ENCODE measurements at regions of chr5 and their contacts with region 1.

Region 1: GRCh38 chr5:150656191-150657132 is 4.6 kb upstream of the MYOZ3 start:
- DNase-seq: peak; percentile 86

Region 2: DNA sequence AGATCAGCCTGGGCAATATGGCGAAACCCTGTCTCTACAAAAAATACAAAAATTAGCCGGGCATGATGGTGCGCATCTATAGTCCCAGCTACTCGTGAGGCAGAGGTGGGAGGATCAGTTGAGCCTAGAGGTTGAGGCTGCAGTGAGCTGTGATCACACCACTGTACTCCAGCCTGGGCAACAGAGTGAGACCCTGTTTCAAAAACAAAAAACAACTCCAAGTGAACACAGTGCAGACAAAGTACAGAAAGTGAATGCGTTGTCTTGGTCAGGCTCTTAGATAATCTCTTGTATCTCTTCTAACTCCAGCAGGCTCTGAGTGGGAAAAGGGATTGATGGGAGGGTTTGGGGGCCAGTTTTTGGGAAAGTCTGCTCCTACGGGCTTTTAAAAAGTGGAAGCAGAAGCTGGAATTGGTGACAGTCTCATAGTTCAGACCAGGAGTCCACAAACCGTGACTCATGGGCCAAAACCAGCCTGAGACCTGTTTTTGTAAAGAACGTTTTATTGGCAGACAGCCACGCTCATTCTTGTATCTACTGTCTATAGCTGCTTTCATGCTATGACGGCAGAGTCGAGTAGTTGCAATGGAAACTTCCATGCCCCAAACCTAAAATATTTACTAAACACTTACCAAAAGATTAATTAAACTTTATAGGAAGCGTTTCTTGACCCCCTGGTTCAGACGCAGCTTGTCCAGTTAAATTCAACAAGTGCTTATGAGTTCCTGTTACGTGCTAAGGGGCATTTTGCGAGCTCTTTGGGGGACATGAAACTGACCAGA is 115.7 kb before region 1 on chr5:
- intact Hi-C with region 1: no loop called
- DNase-seq: no peak

Region 3: DNA sequence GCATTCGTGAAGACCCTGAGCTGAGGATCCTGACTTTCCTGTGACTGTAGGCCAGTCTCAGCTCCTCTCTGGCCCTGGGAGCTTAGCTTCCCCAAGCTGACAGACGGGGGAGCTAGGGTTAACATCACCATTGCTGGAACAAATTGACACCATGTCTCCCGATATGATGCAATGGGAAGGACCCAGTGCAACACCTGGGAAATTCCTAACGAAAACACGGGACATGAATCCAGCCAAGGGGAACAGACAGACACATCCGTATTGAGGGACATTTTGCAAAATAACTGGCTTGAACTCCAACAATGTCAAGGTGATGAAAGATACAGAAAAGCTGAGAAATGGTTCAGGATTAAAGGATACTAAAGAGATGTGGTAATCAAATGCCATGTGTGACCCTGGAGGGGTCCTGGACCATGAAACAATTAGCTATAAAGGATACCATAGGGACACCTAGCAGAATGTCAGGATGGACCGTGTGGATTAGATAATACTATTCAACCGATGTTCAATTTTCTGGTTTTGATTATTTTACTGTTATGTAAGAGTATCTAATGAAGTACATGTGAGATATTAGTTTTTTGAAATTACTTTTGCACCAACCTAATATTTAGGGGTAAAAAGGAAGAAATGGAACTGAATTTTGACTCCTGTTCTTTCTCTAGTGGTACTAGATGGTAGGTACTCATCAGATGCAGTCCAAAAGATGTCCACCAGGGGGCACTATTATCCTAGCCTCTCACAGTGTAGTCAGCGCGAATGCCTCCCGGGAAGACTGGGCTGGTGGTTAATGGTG is 95.9 kb before region 1 on chr5:
- intact Hi-C with region 1: loop called (anchors 1 kb)
- DNase-seq: no peak

Region 4: GRCh38 chr5:150589871-150590601 is 66.4 kb before region 1 on chr5:
- intact Hi-C with region 1: loop called (anchors 2 kb)
- DNase-seq: peak; percentile 86

Region 5: GRCh38 chr5:150615141-150615699 is 41.2 kb before region 1 on chr5:
- intact Hi-C with region 1: loop called (anchors 1 kb)
- DNase-seq: no peak

Region 6: GRCh38 chr5:150672237-150672883 is 15.9 kb after region 1 on chr5:
- intact Hi-C with region 1: loop called (anchors 2 kb)
- DNase-seq: no peak

Region 7: DNA sequence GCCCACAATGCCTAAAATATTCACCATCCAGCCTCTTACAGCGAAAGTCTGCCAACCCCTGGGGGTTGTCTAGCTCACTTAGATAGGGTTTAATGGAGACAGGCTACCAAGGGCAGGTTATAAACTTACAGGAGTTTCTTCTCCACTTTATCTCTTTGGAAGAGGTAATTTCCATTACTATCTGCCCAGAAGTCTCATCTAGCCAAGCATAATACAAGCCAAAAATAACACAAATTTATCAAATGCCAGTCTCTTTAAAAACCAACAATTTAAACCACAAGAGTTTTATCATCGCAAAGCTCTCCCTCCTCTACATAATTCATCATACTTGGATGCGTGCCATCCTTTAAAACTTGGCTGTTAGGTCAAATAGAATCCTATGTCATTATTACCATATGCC is 38.1 kb after region 1 on chr5:
- intact Hi-C with region 1: loop called (anchors 5 kb)
- DNase-seq: no peak

Region 8: DNA sequence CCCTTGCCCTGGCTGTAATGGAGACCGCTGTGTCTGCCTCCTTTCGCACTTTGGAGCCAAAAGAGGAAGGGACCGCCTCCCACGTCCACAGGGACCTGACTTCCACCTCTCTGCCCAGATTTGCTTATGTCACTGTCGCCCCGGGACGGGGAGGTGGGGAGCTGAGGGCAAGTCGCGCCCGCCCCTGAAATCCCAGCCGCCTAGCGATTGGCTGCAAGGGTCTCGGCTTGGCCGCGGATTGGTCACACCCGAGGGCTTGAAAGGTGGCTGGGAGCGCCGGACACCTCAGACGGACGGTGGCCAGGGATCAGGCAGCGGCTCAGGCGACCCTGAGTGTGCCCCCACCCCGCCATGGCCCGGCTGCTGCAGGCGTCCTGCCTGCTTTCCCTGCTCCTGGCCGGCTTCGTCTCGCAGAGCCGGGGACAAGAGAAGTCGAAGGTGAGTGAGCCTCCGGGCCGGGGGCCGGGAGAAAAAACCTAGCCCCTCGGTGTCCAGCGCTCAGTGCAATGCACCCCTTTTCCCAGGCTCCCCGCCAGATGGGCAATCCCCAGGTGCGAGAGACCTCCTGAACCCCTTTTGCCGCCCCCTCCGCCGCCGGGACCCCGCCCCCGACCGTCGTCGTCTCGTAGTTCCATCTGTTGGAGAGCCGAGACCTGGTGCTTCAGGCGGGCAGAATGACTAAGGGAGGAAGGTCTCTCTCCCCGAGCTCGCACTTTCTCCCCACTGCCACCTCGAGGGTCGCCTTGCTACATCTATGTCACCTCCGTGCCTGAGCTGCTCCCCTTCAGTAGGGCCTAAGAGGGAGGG is 364.0 kb after region 1 on chr5 and contains the start of gene GPX3:
- intact Hi-C with region 1: loop called (anchors 5 kb)
- DNase-seq: peak; percentile 97
- total RNA-seq, gene GPX3: 461 TPM